ENCODE measurements at regions of chr13 and their contacts with region 1.

Region 1: DNA sequence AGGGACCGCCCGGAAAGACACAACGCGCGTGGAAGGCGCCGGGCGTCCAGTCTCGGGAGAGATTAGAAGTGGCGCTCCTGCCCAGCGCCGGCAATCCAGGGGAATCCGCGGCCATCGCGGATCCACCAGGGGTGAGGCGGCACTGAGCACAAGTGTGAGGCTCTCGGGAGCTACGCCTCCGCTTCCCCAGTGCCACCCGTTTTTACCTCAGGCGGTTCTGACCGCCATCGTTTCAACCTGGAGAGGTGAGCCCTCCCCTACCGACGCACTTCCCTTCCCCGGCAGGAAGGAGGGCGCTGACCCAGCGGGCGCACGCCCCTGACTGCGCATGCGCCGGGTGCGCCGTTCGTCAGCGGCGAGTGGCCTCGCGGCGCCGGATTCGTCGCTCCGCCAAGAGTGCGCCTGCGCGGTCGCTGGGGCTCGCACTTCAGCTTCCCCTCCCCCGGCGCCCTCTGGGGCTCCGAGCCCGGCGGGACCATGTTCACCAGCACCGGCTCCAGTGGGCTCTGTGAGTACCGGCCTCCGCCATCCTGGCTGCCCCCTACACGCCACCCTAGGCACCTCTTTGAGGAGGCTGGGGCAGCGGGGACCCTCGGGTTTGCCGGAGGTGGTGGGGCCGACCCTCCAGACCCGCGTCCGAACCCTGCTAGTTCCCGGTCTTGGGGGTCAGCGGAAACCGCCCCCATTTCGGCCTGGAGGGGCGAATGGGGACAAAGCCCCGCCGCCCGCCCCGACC is at the start of gene UBAC2:
- DNase-seq: peak; percentile 95
- H3K4me3 Mint-ChIP-seq: peak within 1 kb of the TSS; percentile 91
- H3K27ac Mint-ChIP-seq: peak within 1 kb of the TSS; percentile 90
- H3K4me1 Mint-ChIP-seq: peaks cover 60% of the 10 kb centered on the region
- H3K27me3 Mint-ChIP-seq: no peaks in the 10 kb centered on the region
- total RNA-seq, gene UBAC2: 43.4 to 44.9 TPM

Region 2: GRCh38 chr13:99027260-99027659 is 173.3 kb before region 1 on chr13:
- CTCF ChIA-PET with region 1: no interaction called
- intact Hi-C with region 1: loop called (anchors 2 kb)
- DNase-seq: peak; percentile 35
- H3K4me3 Mint-ChIP-seq: no peak overlapping the region
- H3K27ac Mint-ChIP-seq: peak overlapping the region; percentile 74
- H3K4me1 Mint-ChIP-seq: peaks cover 88% of the 10 kb centered on the region
- H3K27me3 Mint-ChIP-seq: no peaks in the 10 kb centered on the region

Region 3: DNA sequence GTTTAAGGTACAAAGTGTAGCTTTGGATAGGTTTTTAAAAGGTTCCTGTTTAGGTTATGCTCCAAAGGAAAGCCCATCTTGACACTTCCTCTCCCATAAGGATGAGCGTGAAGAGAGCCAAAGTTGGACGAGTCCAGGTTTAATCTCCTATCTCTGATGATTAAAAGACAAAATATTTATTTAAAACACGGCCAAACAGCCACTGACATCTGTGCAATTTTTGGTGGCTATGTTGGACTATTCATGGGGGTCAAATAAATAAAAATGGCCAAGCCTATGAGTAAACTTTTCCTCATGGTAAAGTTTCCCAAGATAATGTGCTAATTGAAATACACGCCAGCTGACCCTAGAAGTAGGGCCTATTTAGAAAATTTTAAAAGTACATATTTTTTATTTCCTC is 153.7 kb before region 1 on chr13:
- CTCF ChIA-PET with region 1: no interaction called
- intact Hi-C with region 1: loop called (anchors 2 kb)
- DNase-seq: no peak
- H3K4me3 Mint-ChIP-seq: peak overlapping the region; percentile 68
- H3K27ac Mint-ChIP-seq: peak overlapping the region; percentile 95
- H3K4me1 Mint-ChIP-seq: peaks cover 91% of the 10 kb centered on the region
- H3K27me3 Mint-ChIP-seq: no peaks in the 10 kb centered on the region

Region 4: GRCh38 chr13:99158846-99159245 is 41.8 kb before region 1 on chr13:
- CTCF ChIA-PET with region 1: no interaction called
- intact Hi-C with region 1: no loop called
- DNase-seq: no peak
- H3K4me3 Mint-ChIP-seq: no peak overlapping the region
- H3K27ac Mint-ChIP-seq: no peak overlapping the region
- H3K4me1 Mint-ChIP-seq: no peaks in the 10 kb centered on the region
- H3K27me3 Mint-ChIP-seq: no peaks in the 10 kb centered on the region

Region 5: DNA sequence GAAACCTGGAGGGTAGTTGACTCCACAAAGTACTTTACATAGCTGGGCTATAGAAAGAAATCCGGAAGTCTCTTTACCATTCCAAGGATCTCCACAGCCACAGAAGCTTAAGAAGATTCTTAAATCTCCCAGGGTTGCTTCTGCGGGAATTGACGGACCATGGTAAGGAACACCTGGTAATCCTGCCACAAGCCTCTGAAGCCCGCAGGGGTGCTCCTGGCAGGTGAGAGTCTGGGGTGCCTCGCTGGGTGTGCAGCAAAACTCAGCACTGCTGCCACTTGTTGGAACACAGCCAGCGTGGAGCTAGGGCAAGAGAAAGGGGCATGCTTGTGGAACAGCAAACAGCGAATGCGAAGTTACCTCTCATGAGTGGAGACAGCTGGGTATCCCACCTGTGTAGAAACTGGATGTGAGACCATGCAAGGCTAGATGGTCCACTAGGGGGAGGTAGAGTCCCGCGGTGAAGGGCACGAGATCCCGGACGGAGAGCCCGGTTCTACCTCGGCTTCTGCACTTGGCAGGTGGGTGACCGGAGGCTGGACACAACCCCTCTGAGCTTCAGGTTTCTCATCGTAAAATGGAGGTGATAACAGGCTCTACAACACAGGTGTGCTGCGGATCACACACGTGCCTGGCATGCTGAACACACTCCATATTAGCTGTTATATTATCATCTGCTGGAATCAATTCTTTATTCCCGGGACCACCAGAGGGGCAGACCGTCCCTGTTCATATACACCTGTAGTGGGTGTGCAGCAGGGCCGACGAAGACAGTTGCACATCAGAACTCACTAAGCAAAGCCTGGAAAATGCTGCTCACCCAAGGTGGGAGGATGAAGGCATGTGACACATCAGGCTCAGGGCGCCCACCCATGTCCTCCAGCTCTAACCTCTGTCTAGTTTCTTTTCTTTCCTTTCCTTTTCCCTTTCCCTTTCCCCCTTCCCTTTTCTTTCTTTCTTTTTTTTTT is 24.0 kb before region 1 on chr13:
- CTCF ChIA-PET with region 1: interaction called, 27 read pairs
- intact Hi-C with region 1: loop called (anchors 2 kb)
- DNase-seq: peak; percentile 87
- H3K4me3 Mint-ChIP-seq: peak overlapping the region; percentile 48
- H3K27ac Mint-ChIP-seq: no peak overlapping the region
- H3K4me1 Mint-ChIP-seq: peaks cover 35% of the 10 kb centered on the region
- H3K27me3 Mint-ChIP-seq: no peaks in the 10 kb centered on the region

Region 6: DNA sequence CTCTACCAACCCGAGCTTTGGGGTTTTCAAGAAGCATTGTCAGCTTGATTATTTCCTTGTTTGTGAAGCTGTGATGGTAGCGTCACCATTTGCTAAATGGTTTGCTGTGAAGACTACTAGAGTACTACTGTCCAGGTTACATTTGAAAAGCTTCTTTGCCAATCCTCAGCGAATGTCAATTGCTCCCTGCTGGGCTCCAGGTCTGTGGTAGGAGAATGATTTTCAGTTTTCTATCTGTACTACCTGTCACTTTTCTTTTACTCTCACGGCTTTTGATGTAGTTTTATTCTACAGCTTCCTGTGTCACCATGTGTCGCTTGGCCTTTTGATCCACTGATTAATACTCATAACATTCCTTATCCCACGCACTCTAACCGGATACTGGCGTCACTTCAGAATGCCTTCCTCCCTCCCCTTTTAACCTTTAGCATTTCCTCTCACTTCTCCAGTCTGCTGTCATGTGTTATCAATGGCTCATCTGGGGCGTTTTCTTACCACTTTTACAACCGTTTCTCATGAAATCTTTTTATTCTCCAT is 114.1 kb after region 1 on chr13:
- CTCF ChIA-PET with region 1: interaction called, 6 read pairs
- intact Hi-C with region 1: loop called (anchors 2 kb)
- DNase-seq: peak; percentile 92
- H3K4me3 Mint-ChIP-seq: peak overlapping the region; percentile 54
- H3K27ac Mint-ChIP-seq: peak overlapping the region; percentile 96
- H3K4me1 Mint-ChIP-seq: peaks cover 82% of the 10 kb centered on the region
- H3K27me3 Mint-ChIP-seq: no peaks in the 10 kb centered on the region

Region 7: DNA sequence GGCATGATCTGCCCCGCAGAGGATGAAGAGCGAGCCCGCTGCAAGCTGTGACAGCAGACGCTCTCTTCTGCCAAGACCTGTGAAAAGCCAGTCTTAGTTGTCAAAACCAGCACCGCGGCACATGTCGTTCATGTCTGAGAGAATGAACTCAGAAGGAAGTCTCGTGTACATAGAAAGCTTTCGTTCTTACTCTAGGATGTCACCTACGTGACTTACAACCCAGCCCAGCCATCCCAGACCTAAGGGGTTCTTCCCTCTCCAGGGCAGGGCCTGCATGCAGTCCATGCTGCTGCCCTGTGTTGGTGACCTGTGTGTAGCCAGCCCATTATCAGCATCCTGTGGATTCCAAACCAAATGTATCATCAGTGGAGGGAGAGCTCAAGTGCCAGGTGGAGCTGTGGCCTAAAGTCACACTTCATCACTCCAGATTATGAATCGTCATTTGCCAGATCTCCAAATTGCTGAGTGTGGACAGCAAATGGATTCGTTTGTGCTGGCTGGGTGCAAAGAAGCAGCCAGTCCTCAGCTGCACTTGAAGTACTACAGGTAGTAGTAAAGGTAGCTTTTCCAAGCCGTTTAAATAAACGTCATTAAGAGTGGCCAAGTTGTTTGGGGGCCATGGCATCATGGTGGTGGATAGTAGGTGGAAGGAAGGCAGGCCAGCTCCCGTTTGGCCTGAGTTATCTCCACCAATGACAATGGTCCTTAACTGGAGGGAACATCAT is 180.5 kb after region 1 on chr13:
- CTCF ChIA-PET with region 1: no interaction called
- intact Hi-C with region 1: loop called (anchors 2 kb)
- DNase-seq: peak; percentile 91
- H3K4me3 Mint-ChIP-seq: no peak overlapping the region
- H3K27ac Mint-ChIP-seq: peak overlapping the region; percentile 79
- H3K4me1 Mint-ChIP-seq: peaks cover 84% of the 10 kb centered on the region
- H3K27me3 Mint-ChIP-seq: no peaks in the 10 kb centered on the region